RWPE1 (cell line): ENCODE measurements at regions of chr5 and their contacts with region 1.

Region 1: DNA sequence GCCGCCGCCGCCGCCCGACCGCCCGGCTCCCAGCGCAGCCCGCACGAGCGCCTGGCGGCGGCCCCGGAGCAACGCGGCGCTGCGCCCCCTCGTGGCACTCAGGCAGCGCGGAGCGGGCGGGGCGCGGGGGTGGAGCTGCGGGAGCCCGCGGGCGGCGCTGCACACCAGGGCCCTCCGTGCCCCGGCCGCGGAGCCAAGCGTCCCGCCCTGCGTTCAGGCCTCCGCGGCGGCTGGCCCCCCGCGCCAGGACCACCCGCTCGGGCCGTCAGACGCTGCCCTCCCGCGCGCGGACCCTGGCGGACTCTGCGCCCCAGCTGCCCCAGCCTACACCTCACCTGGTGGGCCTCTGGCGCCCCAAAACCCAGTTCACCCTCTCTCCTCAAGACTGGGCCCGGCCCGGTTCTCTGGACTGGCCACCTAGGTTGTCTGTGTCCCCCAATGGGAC is at the start of gene RASGEF1C:
- DNase-seq: peak; percentile 82
- H3K27ac ChIP-seq: no peak within 1 kb of the TSS
- CTCF ChIP-seq: peak; percentile 85

Region 2: GRCh38 chr5:179668391-179668790 is 540.8 kb before region 1 on chr5:
- CTCF ChIA-PET with region 1: no interaction called
- POLR2A ChIA-PET with region 1: no interaction called
- DNase-seq: no peak
- H3K27ac ChIP-seq: no peak overlapping the region
- CTCF ChIP-seq: no peak

Region 3: GRCh38 chr5:180117000-180117725 is 92.0 kb before region 1 on chr5:
- CTCF ChIA-PET with region 1: interaction called, 15 read pairs
- POLR2A ChIA-PET with region 1: no interaction called
- DNase-seq: peak; percentile 72
- H3K27ac ChIP-seq: no peak overlapping the region
- CTCF ChIP-seq: peak; percentile 54

Region 4: DNA sequence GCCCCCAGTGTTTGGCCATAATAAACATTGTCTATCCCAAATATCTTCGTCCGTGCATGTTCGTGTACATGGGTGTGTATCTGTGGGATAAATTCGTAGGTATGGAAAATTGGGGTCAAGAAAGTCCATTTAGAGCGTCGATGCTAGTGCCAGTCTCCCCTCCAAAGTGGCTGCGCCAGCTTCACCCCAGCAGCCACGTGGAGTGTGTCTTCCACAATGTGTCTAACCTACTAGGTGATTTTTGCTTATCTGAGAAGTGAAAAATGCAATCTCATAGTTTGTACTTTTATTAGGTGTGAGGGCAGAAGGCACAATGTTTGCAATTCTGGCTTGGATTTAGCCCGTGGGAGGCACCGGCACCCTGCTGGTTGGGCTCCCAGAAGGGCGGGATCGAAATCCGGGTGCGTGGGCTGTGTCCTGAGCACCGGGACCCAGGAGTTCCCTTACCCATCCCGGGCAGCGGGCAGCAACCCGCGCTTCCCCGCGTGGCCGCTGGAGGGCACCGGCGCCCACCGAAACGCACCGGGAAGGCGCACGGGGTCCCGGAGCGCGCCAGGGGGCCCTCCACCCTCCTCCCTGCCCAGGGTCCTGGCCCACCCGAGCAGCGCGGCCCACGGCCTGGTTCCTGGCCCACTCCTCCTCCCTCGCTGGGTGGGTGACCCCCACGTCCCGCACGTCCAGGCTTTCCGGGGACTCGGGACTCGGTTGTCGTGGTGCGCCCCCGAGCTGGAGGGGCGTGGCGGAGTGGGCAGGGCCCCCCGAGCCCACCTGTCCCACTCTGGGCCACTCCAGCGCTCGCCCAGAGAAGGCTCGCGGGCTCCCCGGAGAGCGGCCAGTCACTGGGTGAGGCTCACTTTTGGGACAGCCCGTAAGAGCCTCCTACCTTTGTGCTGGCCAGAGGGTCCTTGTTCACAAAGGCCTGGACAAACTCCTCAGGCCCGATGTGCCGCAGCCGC is 82.2 kb before region 1 on chr5:
- CTCF ChIA-PET with region 1: interaction called, 12 read pairs
- POLR2A ChIA-PET with region 1: no interaction called
- DNase-seq: peak; percentile 75
- H3K27ac ChIP-seq: no peak overlapping the region
- CTCF ChIP-seq: peak; percentile 92

Region 5: GRCh38 chr5:180194410-180195345 is 14.5 kb before region 1 on chr5:
- CTCF ChIA-PET with region 1: interaction called, 15 read pairs
- POLR2A ChIA-PET with region 1: no interaction called
- DNase-seq: no peak
- H3K27ac ChIP-seq: no peak overlapping the region
- CTCF ChIP-seq: no peak